ENCODE measurements at regions of chr10 and their contacts with region 1.

Region 1: DNA sequence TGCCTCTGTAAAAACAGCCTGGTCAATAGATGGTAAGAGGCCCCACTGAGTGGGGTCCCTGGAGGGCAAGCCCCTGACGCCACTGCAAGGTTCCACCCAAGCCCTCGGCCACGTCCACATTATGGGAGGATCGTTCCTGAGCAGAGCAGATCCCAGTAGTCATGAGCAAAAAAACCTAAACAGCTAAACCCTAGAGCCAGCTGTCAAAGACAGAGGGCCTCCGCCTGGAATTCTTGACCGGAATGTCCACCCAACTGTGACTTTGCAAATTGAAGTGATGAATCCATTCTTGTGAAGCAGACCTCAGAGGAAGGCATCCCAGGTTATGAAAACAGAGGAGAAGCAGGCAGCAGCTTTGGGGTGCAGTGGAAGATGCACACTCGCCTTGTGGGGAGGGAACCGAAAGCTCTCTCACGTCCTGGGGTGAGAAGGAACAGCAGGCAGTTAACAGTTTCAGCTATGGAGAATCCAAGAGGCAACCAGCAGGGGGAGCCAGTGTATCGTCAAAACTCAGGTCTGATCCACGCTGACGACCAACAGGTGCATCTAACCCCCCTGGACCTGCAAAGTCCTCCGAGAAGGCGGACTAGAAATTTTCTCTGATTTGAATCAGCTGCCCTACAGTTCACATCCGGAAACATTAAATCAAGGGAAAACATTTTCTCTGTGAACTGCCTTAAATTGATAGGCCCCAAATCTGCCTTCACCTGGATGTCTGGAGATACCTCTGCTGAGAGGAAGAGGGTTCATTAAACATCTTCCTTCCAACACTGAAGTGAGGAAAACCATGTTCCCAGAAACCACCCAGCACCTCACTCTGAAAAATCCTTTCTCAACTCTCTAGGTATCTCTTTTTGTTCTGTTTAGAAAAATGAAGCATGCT is 139.1 kb upstream of the PFKP start:
- DNase-seq: peak; percentile 83
- H3K4me3 Mint-ChIP-seq: no peak overlapping the region
- H3K27ac Mint-ChIP-seq: no peak overlapping the region
- H3K4me1 Mint-ChIP-seq: peaks cover 7% of the 10 kb centered on the region
- H3K27me3 Mint-ChIP-seq: peaks cover 28% of the 10 kb centered on the region

Region 2: GRCh38 chr10:2938869-2939268 is 10.7 kb after region 1 on chr10:
- CTCF ChIA-PET with region 1: interaction called, 11 read pairs
- POLR2A ChIA-PET with region 1: no interaction called
- intact Hi-C with region 1: no loop called
- DNase-seq: no peak
- H3K4me3 Mint-ChIP-seq: no peak overlapping the region
- H3K27ac Mint-ChIP-seq: no peak overlapping the region
- H3K4me1 Mint-ChIP-seq: no peaks in the 10 kb centered on the region
- H3K27me3 Mint-ChIP-seq: peaks cover 43% of the 10 kb centered on the region

Region 3: DNA sequence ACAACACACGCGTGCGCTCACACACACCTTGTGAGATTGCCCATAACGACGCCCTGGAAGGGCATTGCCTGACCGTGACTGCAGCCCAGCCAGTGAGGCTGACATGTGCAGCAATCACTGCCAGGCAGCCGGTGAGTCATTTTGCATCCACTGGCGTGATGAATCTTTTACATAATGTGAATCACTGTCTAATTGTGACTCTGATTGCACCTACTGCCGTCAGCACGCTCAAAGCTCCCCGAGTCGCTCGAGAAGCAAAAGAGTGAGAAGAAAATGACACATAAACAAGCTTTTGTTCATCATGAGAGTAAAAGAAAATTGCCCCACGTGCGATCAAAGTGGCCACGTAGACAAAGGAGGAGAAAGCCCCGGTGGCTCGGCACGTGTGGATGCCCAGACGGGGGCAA is 21.8 kb after region 1 on chr10:
- CTCF ChIA-PET with region 1: interaction called, 12 read pairs
- POLR2A ChIA-PET with region 1: no interaction called
- intact Hi-C with region 1: no loop called
- DNase-seq: peak; percentile 89
- H3K4me3 Mint-ChIP-seq: peak overlapping the region; percentile 20
- H3K27ac Mint-ChIP-seq: peak overlapping the region; percentile 86
- H3K4me1 Mint-ChIP-seq: peaks cover 47% of the 10 kb centered on the region
- H3K27me3 Mint-ChIP-seq: peaks cover 52% of the 10 kb centered on the region

Region 4: GRCh38 chr10:2978111-2978510 is 49.9 kb after region 1 on chr10:
- CTCF ChIA-PET with region 1: interaction called, 36 read pairs
- POLR2A ChIA-PET with region 1: no interaction called
- intact Hi-C with region 1: loop called (anchors 1 kb)
- DNase-seq: no peak
- H3K4me3 Mint-ChIP-seq: no peak overlapping the region
- H3K27ac Mint-ChIP-seq: no peak overlapping the region
- H3K4me1 Mint-ChIP-seq: no peaks in the 10 kb centered on the region
- H3K27me3 Mint-ChIP-seq: peaks cover 1% of the 10 kb centered on the region

Region 5: GRCh38 chr10:3043512-3044368 is 115.5 kb after region 1 on chr10:
- CTCF ChIA-PET with region 1: interaction called, 106 read pairs
- POLR2A ChIA-PET with region 1: no interaction called
- intact Hi-C with region 1: loop called (anchors 1 kb)
- DNase-seq: peak; percentile 69
- H3K4me3 Mint-ChIP-seq: no peak overlapping the region
- H3K27ac Mint-ChIP-seq: no peak overlapping the region
- H3K4me1 Mint-ChIP-seq: peaks cover 6% of the 10 kb centered on the region
- H3K27me3 Mint-ChIP-seq: peaks cover 16% of the 10 kb centered on the region